ENCODE measurements at regions of chrX and their contacts with region 1.

Region 1: GRCh38 chrX:74980802-74981201 is 55.5 kb upstream of the NEXMIF start:
- DNase-seq: no peak
- ATAC-seq: no peak
- H3K4me3 Mint-ChIP-seq: no peak overlapping the region
- H3K27ac Mint-ChIP-seq: no peak overlapping the region
- H3K4me1 Mint-ChIP-seq: no peaks in the 10 kb centered on the region
- H3K27me3 Mint-ChIP-seq: no peaks in the 10 kb centered on the region

Region 2: DNA sequence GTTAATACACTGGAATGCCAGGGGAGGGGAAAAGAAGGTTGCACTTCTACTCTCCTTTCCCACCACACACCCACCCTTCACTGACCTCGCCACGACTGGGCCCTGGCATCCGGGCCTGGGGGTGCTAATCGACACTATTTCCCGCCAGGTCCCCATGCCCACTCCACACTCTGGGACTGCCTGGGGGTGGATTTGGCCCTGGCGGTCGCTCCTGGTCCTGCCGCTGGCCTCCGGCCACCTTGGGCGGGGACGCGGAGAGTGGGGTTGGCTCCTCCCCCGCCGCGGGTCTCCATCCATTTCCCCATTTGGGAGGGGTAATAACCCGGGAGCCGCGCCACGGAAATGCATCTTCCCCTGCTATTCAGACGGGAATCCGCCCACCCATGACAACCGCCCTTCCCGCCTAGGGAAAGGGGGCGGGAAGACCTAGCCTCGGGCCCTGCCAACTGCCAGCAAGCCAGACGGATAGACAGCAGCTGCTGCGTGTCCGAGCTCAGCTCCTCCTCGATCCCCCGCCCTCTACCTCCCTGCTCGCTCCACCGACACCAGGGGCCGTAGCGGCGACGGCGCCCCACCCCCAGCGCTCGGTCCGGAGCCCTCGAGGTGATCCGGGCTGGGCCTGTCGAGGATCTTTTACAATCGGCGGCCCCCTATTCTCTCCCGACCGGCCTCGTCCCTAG is 444.5 kb before region 1 on chrX:
- CTCF ChIA-PET with region 1: no interaction called
- POLR2A ChIA-PET with region 1: no interaction called
- intact Hi-C with region 1: no loop called
- DNase-seq: peak; percentile 51
- ATAC-seq: peak; percentile 30
- H3K4me3 Mint-ChIP-seq: peak overlapping the region; percentile 66
- H3K27ac Mint-ChIP-seq: peak overlapping the region; percentile 74
- H3K4me1 Mint-ChIP-seq: peaks cover 36% of the 10 kb centered on the region
- H3K27me3 Mint-ChIP-seq: no peaks in the 10 kb centered on the region

Region 3: DNA sequence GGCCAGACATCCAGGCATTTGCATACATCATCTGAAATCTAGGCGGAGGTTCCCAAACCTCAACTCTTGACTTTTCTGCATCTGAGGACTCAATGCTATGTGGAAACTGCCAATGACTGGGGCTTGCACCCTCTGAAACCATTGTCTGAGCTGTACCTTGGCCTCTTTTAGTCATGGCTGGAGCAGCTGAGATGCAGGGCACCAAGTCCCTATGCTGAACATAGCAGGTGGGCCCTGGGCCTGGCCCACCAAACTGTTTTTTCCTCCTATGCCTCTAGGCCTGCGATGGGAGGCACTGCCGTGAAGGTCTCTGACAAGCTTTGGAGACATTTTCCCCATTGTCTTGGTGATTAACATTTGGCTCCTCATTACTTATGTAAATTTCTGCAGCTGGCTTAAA is 1214.8 kb after region 1 on chrX:
- CTCF ChIA-PET with region 1: no interaction called
- POLR2A ChIA-PET with region 1: no interaction called
- intact Hi-C with region 1: no loop called
- DNase-seq: no peak
- ATAC-seq: no peak
- H3K4me3 Mint-ChIP-seq: no peak overlapping the region
- H3K27ac Mint-ChIP-seq: no peak overlapping the region
- H3K4me1 Mint-ChIP-seq: peaks cover 7% of the 10 kb centered on the region
- H3K27me3 Mint-ChIP-seq: no peaks in the 10 kb centered on the region

Region 4: GRCh38 chrX:76427560-76428242 is 1446.9 kb after region 1 on chrX and contains the start of gene MAGEE1:
- CTCF ChIA-PET with region 1: no interaction called
- POLR2A ChIA-PET with region 1: interaction called, 11 read pairs
- intact Hi-C with region 1: no loop called
- DNase-seq: peak; percentile 86
- ATAC-seq: peak; percentile 83
- H3K4me3 Mint-ChIP-seq: peak within 1 kb of the TSS; percentile 79
- H3K27ac Mint-ChIP-seq: peak within 1 kb of the TSS; percentile 76
- H3K4me1 Mint-ChIP-seq: peaks cover 32% of the 10 kb centered on the region
- H3K27me3 Mint-ChIP-seq: no peaks in the 10 kb centered on the region
- total RNA-seq, gene MAGEE1: 3.8 to 4.0 TPM